PC-9 (cell line): ENCODE measurements at regions of chr10 and their contacts with region 1.

Region 1: GRCh38 chr10:3467052-3467951 is 294.7 kb upstream of the PITRM1 start:
- DNase-seq: peak; percentile 83 to 96
- H3K4me3 ChIP-seq: peak overlapping the region; percentile 42; the same call in 1 of the 2 replicates
- H3K27ac ChIP-seq: peak overlapping the region; percentile 100
- H3K4me1 ChIP-seq: peaks cover 58% of the 10 kb centered on the region
- H3K27me3 ChIP-seq: no peaks in the 10 kb centered on the region
- CTCF ChIP-seq: peak; percentile 61

Region 2: DNA sequence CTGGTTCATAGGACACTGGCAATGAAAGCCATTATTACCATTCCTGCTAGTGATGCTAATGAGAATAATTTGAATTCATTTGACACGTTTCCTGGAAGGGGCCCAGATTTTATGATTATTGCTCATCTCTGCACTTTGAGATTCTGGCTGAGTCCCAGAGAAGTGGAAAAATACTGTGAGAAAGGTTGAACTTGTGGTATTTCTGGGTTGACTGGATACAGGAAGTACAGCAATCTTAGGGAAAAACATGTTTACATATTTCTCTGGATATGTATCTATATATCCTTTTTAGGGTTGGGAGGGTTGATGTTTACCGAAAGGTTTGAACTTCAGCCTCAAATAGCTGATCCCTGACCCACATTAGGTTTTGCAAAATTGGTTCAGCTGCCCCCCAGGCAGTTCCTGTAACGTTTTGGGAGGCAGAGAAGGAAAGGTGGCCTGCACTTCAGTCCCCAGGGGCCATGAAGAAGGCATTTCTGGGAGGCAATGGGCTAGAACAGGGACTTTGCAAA is 41.1 kb before region 1 on chr10:
- CTCF ChIA-PET with region 1: no interaction called
- POLR2A ChIA-PET with region 1: no interaction called
- intact Hi-C with region 1: loop called (anchors 1 kb)
- DNase-seq: peak; percentile 27 to 87
- H3K4me3 ChIP-seq: no peak overlapping the region
- H3K27ac ChIP-seq: peak overlapping the region; percentile 86
- H3K4me1 ChIP-seq: peaks cover 39% of the 10 kb centered on the region
- H3K27me3 ChIP-seq: no peaks in the 10 kb centered on the region
- CTCF ChIP-seq: no peak

Region 3: DNA sequence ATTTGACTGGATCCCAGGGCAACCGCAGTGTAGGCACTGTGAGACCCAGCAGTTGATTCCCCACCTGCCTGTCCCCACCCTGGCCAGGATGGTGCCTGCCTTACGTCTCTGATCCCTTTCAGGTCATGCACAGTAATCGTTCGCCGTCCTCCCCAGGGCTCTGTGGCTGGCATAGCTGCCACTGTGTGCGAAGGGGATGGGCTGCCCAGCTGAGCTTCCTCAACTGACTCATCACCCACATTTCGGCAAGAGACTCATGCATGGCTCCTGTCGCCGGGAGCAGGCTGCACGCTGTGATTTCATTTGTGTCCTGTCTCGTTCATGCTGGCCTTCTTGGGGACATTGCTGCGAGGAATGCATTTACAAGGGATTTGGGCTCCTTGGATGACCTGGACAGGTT is 65.3 kb after region 1 on chr10:
- CTCF ChIA-PET with region 1: no interaction called
- POLR2A ChIA-PET with region 1: no interaction called
- intact Hi-C with region 1: loop called (anchors 2 kb)
- DNase-seq: peak; percentile 65 to 78
- H3K4me3 ChIP-seq: peak overlapping the region; percentile 46; the same call in 1 of the 2 replicates
- H3K27ac ChIP-seq: peak overlapping the region; percentile 96
- H3K4me1 ChIP-seq: peaks cover 17% of the 10 kb centered on the region
- H3K27me3 ChIP-seq: no peaks in the 10 kb centered on the region
- CTCF ChIP-seq: no peak

Region 4: DNA sequence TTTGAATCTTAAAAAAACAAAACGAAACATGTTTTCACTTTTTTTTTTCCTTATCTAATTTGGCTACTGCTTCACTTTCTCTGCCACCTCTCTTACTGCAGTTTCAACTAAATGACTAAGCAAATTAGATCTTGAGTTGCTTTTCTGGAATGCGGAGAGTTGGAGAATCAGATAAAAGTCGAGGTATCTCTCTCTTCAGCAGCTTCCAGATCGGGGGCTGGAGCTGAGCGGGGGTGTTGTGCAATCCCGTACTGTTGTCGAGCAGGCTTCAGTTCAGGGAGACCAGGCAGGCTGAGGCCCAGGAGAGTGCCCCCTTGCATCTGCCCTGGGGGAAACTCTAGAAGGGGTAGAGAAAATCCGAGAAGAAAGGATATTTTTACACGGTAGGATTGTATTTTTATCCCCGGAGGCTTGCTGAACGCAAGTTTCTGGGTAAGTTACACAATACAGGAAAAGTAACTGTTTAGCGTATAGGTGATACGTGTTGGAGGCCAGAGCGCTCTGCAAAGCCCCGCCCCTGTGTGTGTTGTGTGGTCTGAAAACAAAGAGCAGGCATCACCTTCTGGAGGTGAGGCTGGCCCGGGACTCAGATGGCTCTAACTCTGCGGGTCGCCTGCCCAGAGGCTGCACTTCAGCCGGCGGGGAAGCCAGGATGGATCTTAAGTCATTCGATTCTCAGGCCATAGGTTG is 201.1 kb after region 1 on chr10:
- CTCF ChIA-PET with region 1: no interaction called
- POLR2A ChIA-PET with region 1: no interaction called
- intact Hi-C with region 1: loop called (anchors 1 kb)
- DNase-seq: peak; percentile 87 to 94
- H3K4me3 ChIP-seq: peak overlapping the region; percentile 50; the same call in 1 of the 2 replicates
- H3K27ac ChIP-seq: peak overlapping the region; percentile 99
- H3K4me1 ChIP-seq: peaks cover 23% of the 10 kb centered on the region
- H3K27me3 ChIP-seq: no peaks in the 10 kb centered on the region
- CTCF ChIP-seq: no peak

Region 5: DNA sequence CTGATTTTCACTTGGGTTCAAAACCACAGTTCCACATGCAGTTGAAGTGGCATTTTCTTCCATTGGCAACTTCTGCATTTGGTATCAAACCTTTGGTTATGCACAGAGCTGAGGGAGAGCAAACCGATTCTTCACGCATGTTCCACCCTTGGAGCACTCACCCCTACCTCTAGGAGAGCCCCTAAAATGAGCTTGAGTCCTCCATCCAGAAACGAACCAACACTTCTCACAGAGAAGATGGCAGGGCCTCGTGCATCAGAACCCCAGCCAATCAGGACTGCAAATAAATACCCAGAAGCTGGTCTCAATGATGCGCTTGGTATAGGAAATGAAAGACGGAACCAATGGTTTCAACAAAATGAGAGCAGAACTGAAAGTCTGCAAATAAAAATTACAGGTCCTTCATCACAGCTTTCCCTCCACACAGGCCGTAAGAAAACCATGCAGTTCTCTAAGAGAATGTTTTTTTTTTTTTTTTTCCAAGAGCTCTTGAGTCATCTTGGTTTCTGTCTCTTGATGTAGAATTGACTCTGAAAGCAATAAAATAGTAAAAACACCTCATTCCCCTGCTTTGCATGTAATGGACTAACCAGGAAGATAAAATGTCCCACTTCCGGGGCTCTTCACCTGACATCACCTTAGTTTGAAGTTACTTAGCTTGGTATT is 293.9 kb after region 1 on chr10:
- CTCF ChIA-PET with region 1: no interaction called
- POLR2A ChIA-PET with region 1: no interaction called
- intact Hi-C with region 1: loop called (anchors 1 kb)
- DNase-seq: peak in 1 of 2 experiments; percentile 53
- H3K4me3 ChIP-seq: 0 out of 2 replicates have a peak overlapping the region, but pooled peaks have one; percentile 12
- H3K27ac ChIP-seq: peak overlapping the region; percentile 100
- H3K4me1 ChIP-seq: peaks cover 89% of the 10 kb centered on the region
- H3K27me3 ChIP-seq: no peaks in the 10 kb centered on the region
- CTCF ChIP-seq: no peak

Region 6: GRCh38 chr10:3887885-3888476 is 420.7 kb after region 1 on chr10:
- CTCF ChIA-PET with region 1: no interaction called
- POLR2A ChIA-PET with region 1: no interaction called
- intact Hi-C with region 1: loop called (anchors 5 kb)
- DNase-seq: peak; percentile 50 to 89
- H3K4me3 ChIP-seq: no peak overlapping the region
- H3K27ac ChIP-seq: peak overlapping the region; percentile 90
- H3K4me1 ChIP-seq: peaks cover 41% of the 10 kb centered on the region
- H3K27me3 ChIP-seq: no peaks in the 10 kb centered on the region
- CTCF ChIP-seq: no peak

Region 7: GRCh38 chr10:4051011-4051640 is 583.8 kb after region 1 on chr10:
- CTCF ChIA-PET with region 1: no interaction called
- POLR2A ChIA-PET with region 1: no interaction called
- intact Hi-C with region 1: no loop called
- DNase-seq: no peak
- H3K4me3 ChIP-seq: no peak overlapping the region
- H3K27ac ChIP-seq: no peak overlapping the region
- H3K4me1 ChIP-seq: no peaks in the 10 kb centered on the region
- H3K27me3 ChIP-seq: no peaks in the 10 kb centered on the region
- CTCF ChIP-seq: no peak

Region 8: DNA sequence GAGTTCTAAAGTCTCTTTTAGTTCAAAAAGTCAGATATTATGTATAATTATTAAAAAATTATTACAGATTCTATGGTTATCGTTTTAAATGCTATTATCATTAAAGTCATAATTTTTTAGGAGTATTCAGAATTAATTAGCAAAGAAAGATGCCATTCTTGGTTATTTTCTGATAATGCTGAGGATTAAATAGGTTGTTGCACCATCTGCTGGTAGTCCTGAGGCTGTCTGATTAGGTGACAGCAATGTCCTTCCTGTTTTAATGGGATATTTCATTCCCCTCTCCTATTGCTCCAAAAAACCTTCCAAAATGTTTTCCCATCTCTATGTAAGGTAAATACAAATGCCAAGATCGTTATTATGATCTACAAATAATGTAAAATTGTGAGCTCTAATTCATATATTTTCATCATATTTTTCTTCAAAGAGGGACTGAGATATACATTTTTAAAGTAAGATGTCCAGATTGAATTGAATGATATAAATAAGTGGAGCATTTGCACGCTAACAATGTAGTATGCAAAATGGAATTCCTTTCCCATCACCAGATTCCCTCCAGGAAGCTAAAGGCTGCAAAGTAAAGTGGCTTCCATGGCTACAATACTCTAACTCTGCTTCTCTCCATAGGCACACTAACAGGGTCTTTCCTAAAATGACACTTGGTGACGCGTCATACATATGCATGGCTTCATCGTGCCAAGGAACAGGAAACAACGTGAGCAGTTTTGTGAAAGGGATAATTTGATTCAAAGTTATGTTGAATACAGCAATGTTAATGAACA is 1299.9 kb after region 1 on chr10:
- CTCF ChIA-PET with region 1: no interaction called
- POLR2A ChIA-PET with region 1: no interaction called
- intact Hi-C with region 1: loop called (anchors 2 kb)
- DNase-seq: no peak
- H3K4me3 ChIP-seq: no peak overlapping the region
- H3K27ac ChIP-seq: no peak overlapping the region
- H3K4me1 ChIP-seq: peaks cover 19% of the 10 kb centered on the region
- H3K27me3 ChIP-seq: no peaks in the 10 kb centered on the region
- CTCF ChIP-seq: peak; percentile 72